ENCODE measurements at regions of chr9 and their contacts with region 1.

Region 1: DNA sequence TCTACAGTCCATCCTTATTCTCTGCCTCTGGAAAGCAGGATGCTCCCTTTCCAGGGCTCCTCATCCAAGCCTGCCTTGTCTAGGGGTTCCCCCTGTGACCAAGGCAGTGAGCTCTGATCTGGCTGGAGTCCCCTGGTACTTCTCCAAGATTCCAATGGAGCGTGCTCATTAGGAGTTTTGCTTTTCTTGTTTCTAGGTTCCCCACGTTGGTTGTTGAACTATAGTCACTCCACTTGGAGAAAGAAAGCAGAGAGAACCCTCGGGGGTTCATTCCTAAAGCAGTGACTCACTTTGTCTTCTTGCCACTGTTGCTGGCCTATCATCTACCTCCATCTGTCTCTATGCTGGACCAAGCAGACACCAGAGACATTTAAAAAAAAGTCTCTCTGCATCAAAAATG is 192.6 kb downstream of the TLE4 start:
- DNase-seq: no peak
- ATAC-seq: no peak
- H3K4me3 Mint-ChIP-seq: no peak overlapping the region
- H3K27ac Mint-ChIP-seq: no peak overlapping the region
- H3K4me1 Mint-ChIP-seq: peaks cover 3% of the 10 kb centered on the region
- H3K27me3 Mint-ChIP-seq: no peaks in the 10 kb centered on the region

Region 2: DNA sequence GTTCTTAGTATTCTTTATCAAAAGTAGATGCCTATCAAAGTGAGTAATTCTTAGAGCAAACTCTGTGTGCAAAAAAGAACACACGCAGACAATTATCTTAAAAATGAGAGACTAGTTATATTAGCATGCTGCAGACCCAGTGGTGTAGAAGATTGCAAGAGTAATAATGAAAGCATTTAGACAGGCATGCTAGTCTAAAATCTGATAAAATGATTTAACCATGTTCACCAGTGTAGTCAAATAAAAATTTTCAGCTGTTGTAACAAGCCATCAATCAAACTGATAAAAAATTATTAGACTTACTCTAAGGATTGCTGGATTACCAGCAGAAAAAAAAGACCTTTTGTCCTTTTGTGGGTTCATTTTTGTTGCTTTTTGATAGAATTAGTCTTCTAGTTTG is 434.5 kb before region 1 on chr9:
- CTCF ChIA-PET with region 1: no interaction called
- POLR2A ChIA-PET with region 1: no interaction called
- intact Hi-C with region 1: no loop called
- DNase-seq: no peak
- ATAC-seq: no peak
- H3K4me3 Mint-ChIP-seq: no peak overlapping the region
- H3K27ac Mint-ChIP-seq: no peak overlapping the region
- H3K4me1 Mint-ChIP-seq: no peaks in the 10 kb centered on the region
- H3K27me3 Mint-ChIP-seq: no peaks in the 10 kb centered on the region

Region 3: GRCh38 chr9:80146466-80146865 is 382.1 kb after region 1 on chr9:
- CTCF ChIA-PET with region 1: no interaction called
- POLR2A ChIA-PET with region 1: no interaction called
- intact Hi-C with region 1: loop called in 1 of 2 experiments (anchors 10 kb)
- DNase-seq: no peak
- ATAC-seq: no peak
- H3K4me3 Mint-ChIP-seq: no peak overlapping the region
- H3K27ac Mint-ChIP-seq: no peak overlapping the region
- H3K4me1 Mint-ChIP-seq: no peaks in the 10 kb centered on the region
- H3K27me3 Mint-ChIP-seq: peaks cover 2% of the 10 kb centered on the region